PC-3 (cell line): ENCODE measurements at regions of chr5 and their contacts with region 1.

Region 1: DNA sequence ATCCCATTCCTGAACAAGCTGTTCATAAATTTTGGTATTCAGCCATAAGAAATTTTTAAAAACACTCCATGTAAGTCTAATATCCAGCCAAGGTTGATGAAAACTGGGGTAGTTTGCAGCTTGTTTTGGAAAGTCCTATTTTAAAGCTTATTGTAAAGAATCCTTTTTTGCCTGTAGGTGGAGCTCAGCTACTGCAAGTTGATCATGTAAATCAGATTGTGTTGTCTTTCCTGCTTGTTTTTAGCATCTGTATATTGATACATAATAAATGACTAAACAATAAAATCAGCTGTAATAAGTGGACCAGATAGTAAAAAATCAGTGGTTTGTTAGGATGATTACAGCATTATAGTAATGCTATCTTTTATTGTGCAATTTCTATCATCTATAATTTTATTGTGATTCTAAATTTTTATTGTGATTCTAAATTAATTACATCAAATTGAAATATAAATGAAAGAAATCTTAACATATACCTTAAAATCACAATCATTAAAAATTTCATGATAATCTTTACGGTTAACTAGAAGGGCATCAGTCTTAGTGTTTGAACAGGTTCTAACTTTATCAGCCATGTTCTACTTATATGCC is 42.4 kb downstream of the CWC27 start:
- DNase-seq: peak; percentile 48
- ATAC-seq: peak; percentile 53
- H3K4me3 ChIP-seq: no peak overlapping the region
- H3K27ac ChIP-seq: no peak overlapping the region
- H3K4me1 ChIP-seq: no peaks in the 10 kb centered on the region
- H3K27me3 ChIP-seq: no peaks in the 10 kb centered on the region
- CTCF ChIP-seq: peak; percentile 75

Region 2: GRCh38 chr5:64958757-64959391 is 147.7 kb after region 1 on chr5:
- CTCF ChIA-PET with region 1: no interaction called
- POLR2A ChIA-PET with region 1: no interaction called
- intact Hi-C with region 1: loop called (anchors 2 kb)
- DNase-seq: peak; percentile 49
- ATAC-seq: no peak
- H3K4me3 ChIP-seq: no peak overlapping the region
- H3K27ac ChIP-seq: no peak overlapping the region
- H3K4me1 ChIP-seq: no peaks in the 10 kb centered on the region
- H3K27me3 ChIP-seq: no peaks in the 10 kb centered on the region
- CTCF ChIP-seq: peak; percentile 67

Region 3: GRCh38 chr5:65035211-65036206 is 224.4 kb after region 1 on chr5:
- CTCF ChIA-PET with region 1: no interaction called
- POLR2A ChIA-PET with region 1: no interaction called
- intact Hi-C with region 1: loop called (anchors 5 kb)
- DNase-seq: peak; percentile 80
- ATAC-seq: peak; percentile 90
- H3K4me3 ChIP-seq: peak overlapping the region; percentile 69
- H3K27ac ChIP-seq: peak overlapping the region; percentile 89
- H3K4me1 ChIP-seq: peaks cover 14% of the 10 kb centered on the region
- H3K27me3 ChIP-seq: no peaks in the 10 kb centered on the region
- CTCF ChIP-seq: no peak

Region 4: DNA sequence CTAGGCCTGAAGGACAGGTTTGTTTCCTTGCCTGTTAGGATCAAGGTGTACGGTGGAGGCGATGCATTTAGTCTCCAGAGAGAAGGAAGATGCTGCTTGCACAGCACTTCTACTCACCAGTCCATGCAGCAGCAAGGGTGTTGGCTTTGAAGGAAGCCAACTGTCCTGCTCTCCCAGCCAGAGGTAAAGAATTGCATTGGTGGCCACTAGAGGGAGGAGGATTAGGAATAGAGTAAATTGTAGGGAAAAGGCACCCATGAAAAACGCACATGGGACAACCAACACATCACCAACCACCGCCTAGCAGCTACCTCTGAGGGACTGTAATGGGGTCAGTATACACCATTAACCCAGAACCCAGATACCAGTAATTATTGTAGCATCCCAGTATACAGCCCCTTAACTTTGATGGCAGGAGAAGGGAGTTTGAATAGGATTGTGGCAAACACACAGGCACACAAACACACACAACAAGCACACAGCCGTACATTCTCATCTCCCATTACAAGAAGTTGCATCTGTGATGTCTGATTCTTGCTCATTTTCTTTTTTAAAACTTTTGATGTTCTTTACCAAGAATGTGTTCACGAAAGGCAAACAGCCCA is 402.9 kb after region 1 on chr5:
- CTCF ChIA-PET with region 1: no interaction called
- POLR2A ChIA-PET with region 1: no interaction called
- intact Hi-C with region 1: loop called (anchors 10 kb)
- DNase-seq: peak; percentile 45
- ATAC-seq: peak; percentile 29; the same call in 1 of the 2 replicates
- H3K4me3 ChIP-seq: no peak overlapping the region
- H3K27ac ChIP-seq: no peak overlapping the region
- H3K4me1 ChIP-seq: peaks cover 25% of the 10 kb centered on the region
- H3K27me3 ChIP-seq: no peaks in the 10 kb centered on the region
- CTCF ChIP-seq: peak; percentile 58

Region 5: DNA sequence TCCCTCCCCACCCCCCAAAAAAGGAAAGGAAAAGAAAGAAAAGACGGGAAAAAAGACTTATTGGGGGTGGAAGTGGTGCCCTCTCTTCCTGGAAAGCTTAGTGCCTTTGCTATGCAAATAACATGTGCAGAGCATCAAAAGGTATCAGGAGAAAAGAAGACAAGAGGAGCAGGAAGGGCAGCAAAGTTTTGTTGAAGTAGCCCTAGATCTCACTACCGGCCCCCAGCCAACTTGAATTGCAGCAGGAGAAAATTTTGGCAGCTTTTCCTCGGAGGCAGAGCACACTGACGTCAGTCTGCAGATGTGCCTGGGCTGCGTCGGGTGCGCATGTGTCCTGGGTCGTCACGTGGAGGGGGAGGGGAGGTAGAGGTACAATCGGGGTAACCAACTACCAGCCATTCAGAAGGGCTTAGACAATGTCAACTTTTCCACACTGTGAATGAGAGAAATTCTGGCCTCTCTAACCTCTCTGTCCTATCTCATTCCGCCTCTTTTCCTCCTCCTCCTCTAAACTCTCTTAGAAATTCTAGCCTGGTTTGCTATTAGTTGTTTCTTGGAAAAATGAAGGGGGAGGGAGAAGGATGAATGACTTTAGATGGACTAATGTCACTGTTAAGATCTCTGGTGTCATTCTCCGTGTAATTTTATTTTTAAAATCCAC is 670.6 kb after region 1 on chr5 and contains the start of gene ADAMTS6:
- CTCF ChIA-PET with region 1: interaction called, 8 read pairs
- POLR2A ChIA-PET with region 1: no interaction called
- intact Hi-C with region 1: loop called (anchors 1 kb)
- DNase-seq: peak; percentile 59
- ATAC-seq: peak; percentile 65
- H3K4me3 ChIP-seq: peak within 1 kb of the TSS; percentile 79
- H3K27ac ChIP-seq: peak within 1 kb of the TSS; percentile 48
- H3K4me1 ChIP-seq: peaks cover 7% of the 10 kb centered on the region; the same call in 1 of the 2 replicates
- H3K27me3 ChIP-seq: no peaks in the 10 kb centered on the region
- CTCF ChIP-seq: no peak
- total RNA-seq, gene ADAMTS6: 1.5 and 1.7 TPM in 2 replicates